ENCODE measurements at regions of chr10 and their contacts with region 1.

Region 1: GRCh38 chr10:101141616-101142532 is 10.8 kb downstream of the TLX1 start:
- H3K4me3 ChIP-seq: no peak overlapping the region
- H3K27ac ChIP-seq: no peak overlapping the region
- H3K4me1 ChIP-seq: no peaks in the 10 kb centered on the region
- CTCF ChIP-seq: peak; percentile 88

Region 2: DNA sequence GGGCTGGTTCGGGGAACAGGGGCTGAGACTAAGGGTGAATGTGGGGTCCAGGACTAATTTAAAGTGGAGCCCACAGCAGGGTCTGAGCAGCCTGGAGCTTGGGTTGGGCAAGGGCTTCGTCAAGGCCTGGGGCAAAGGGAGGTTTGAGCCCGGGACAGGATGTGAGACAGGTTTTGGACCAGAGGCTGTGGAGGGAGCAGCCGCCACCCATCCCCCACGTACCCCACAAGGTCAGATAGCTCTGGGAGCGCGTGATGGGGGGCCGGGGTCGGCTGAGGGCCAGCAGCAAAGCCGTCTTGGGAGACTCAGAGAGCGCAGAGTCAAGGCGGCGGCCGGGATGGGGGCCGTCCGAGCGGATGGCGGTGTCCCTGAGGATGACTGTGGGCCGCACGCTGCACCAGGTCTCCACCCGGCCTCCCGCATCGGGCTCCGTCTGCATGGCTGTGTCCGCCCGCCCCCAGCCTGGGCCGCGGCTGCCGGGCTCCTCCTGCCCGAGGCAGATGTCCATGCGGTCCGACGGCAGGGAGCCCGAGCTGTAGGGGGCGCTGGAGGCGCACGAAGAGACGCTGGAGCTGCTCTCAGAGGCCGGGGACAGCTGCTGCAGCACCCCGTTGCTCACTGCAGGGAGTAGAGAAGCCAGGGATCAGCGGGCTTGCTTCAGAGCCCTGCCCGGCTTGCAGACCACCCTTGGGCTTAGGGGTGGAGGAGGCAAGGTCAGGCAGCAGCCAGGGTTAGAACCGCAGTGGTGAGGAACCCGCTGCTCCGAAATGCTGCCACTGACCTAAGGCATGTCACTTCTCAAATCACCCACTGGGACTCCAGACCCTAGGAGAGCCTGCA is 123.1 kb before region 1 on chr10:
- CTCF ChIA-PET with region 1: interaction called, 15 read pairs
- POLR2A ChIA-PET with region 1: no interaction called
- H3K4me3 ChIP-seq: no peak overlapping the region
- H3K27ac ChIP-seq: no peak overlapping the region
- H3K4me1 ChIP-seq: no peaks in the 10 kb centered on the region; the same call in 1 of the 2 replicates
- CTCF ChIP-seq: peak; percentile 95

Region 3: DNA sequence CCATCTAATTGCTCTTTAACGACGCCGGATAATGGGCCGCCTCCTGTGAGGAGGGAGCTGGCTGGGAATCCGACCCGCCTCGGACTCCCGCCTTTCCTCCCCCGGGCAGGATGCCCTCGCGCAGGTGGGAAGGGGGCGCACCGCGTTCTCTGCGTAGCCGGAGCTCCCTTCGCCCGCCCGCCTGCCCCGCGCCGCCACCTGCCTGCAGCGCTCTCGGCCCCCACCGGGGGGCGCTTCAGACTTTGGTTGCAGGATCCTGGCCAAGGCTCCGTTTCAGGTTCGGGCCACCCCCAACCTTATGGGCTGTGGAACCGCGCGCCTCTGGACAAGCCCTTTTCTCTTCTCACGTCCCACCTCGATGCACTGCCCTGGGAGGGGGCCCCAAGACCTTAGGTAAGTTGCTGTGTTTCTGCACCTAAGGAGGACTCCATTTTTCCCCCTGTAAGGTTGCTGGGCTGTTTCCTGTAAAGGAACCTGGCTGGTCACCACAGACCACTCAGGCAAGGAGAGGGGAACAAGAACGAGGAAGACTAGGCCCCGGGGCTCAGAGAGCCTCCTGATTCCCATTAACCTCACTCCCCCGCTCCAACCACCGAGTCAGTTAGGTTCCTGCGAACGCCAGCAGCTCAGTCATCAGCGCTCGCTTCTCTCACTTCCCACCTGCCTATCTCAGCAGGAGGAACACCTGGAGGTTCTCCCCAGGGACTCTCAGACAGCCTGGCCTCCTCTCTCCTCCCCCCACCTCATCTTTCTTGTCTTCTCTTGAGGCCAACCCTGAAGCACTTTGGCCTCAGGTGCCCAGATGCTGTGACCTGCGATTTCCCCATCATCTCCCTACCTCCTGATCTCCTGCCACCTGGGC is 91.4 kb before region 1 on chr10:
- CTCF ChIA-PET with region 1: interaction called, 73 read pairs
- POLR2A ChIA-PET with region 1: interaction called, 4 read pairs
- H3K4me3 ChIP-seq: no peak overlapping the region; the same call in 1 of the 2 replicates
- H3K27ac ChIP-seq: no peak overlapping the region
- H3K4me1 ChIP-seq: peaks cover 8% of the 10 kb centered on the region
- CTCF ChIP-seq: peak; percentile 94

Region 4: GRCh38 chr10:101075775-101076174 is 66.1 kb before region 1 on chr10:
- CTCF ChIA-PET with region 1: interaction called, 23 read pairs
- POLR2A ChIA-PET with region 1: no interaction called
- H3K4me3 ChIP-seq: no peak overlapping the region
- H3K27ac ChIP-seq: no peak overlapping the region
- H3K4me1 ChIP-seq: no peaks in the 10 kb centered on the region
- CTCF ChIP-seq: no peak

Region 5: GRCh38 chr10:101107771-101108170 is 34.1 kb before region 1 on chr10:
- CTCF ChIA-PET with region 1: interaction called, 506 read pairs
- POLR2A ChIA-PET with region 1: no interaction called
- H3K4me3 ChIP-seq: no peak overlapping the region
- H3K27ac ChIP-seq: no peak overlapping the region
- H3K4me1 ChIP-seq: no peaks in the 10 kb centered on the region
- CTCF ChIP-seq: no peak

Region 6: GRCh38 chr10:101161494-101162299 is 19.8 kb after region 1 on chr10:
- CTCF ChIA-PET with region 1: interaction called, 22 read pairs
- POLR2A ChIA-PET with region 1: no interaction called
- H3K4me3 ChIP-seq: peak overlapping the region; percentile 21
- H3K27ac ChIP-seq: no peak overlapping the region
- H3K4me1 ChIP-seq: peaks cover 6% of the 10 kb centered on the region; the same call in 1 of the 2 replicates
- CTCF ChIP-seq: peak; percentile 93

Measured in HEK293 (cell line).